Vagina (tissue), 2 donors: ENCODE measurements at regions of chr14 and their contacts with region 1.

Region 1: DNA sequence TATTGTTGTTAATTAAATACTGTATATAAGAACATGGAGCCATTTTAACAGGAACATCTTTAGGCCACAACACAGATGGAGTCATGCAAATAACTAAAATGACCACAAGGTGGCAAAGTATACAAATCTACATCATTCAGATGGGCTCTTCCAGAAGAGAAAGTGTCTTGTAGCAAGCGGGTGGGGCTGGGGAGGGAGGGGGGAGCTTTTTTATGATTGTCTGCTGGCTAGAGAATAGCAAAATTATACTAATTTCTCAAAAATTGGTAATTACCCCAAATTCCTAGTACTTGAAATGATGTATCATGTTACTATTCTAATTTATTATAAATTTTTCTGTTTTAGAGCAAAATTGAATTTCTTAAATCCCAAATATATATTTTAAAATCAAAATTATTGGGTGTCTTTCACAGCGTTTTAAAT is 378.7 kb downstream of the PRKD1 start:
- DNase-seq: no peak
- H3K4me3 ChIP-seq: no peak overlapping the region
- H3K27ac ChIP-seq: no peak overlapping the region
- H3K4me1 ChIP-seq: no peaks in the 10 kb centered on the region
- H3K27me3 ChIP-seq: no peaks in the 10 kb centered on the region
- CTCF ChIP-seq: peak; percentile 16 to 52 (median 22)
- POLR2A ChIP-seq: no peak

Region 2: GRCh38 chr14:29421156-29421728 is 127.7 kb before region 1 on chr14:
- intact Hi-C with region 1: no loop called
- DNase-seq: no peak
- H3K4me3 ChIP-seq: no peak overlapping the region
- H3K27ac ChIP-seq: no peak overlapping the region
- H3K4me1 ChIP-seq: no peaks in the 10 kb centered on the region
- H3K27me3 ChIP-seq: no peaks in the 10 kb centered on the region
- CTCF ChIP-seq: no peak
- POLR2A ChIP-seq: no peak

Region 3: DNA sequence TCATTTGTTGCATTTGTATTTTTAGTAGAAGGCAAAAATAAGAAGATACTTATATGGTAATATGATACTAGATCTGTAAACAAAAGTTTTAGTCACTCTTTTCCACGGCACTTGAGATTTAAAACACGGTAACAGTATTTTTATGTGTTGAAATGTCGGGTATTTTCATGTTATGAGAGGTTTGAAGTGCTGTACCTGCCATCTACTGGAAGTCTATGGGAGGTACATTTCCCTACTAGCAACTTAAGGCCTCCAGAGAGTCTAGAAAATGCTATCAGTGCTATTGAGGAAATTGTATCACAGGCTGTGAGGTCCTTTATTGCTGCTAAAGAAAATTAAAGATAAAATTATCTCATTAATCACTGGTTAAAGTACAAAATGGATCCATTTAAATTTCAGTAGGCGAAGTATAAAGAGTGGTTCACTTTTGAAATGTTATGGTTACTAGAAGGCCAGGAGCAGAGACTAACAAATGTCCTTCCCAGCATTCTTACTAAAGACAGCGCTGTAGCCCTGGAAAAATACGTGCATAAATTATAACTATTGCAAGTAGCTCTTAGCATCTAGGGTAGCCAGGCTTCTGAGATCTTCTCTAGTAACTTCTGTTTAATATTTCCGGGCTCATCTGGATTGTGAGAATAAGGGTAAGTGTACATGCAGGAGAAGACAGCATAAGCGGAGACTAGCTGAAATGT is 456.3 kb after region 1 on chr14:
- intact Hi-C with region 1: loop called (anchors 10 kb)
- DNase-seq: no peak
- H3K4me3 ChIP-seq: no peak overlapping the region
- H3K27ac ChIP-seq: no peak overlapping the region
- H3K4me1 ChIP-seq: no peaks in the 10 kb centered on the region
- H3K27me3 ChIP-seq: no peaks in the 10 kb centered on the region
- CTCF ChIP-seq: peak in 2 of 3 experiments; percentile 49 to 61
- POLR2A ChIP-seq: no peak

Region 4: DNA sequence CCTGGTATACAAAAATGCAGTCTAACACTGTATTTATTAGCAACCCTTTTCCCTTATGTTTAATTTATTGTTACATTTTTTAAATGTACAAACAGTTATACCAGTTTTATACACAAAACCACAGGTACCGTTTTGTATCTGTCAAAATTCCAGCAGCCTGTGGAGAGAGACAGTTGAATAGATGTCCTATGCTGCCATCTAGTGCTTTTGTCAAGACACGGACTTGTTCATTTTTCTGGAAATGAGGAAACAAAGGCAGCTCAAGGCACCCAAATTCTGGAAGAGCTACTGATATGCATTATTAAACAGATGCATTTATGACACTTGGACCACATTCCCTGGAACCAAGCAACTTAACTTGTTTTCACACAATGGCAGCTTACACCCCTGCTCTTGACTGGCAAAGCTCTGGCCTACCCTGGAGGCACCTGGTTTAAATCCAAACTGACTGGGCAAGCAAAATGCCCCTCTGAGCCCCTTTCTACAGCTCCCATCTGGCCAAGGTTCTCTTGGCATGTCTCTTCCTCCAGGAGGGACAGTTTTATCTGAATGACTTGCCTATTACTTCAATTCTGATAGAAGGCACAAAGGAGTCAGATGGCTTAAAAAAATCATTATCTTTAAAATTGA is 665.6 kb after region 1 on chr14:
- intact Hi-C with region 1: loop called (anchors 5 kb)
- DNase-seq: no peak
- H3K4me3 ChIP-seq: no peak overlapping the region
- H3K27ac ChIP-seq: no peak overlapping the region
- H3K4me1 ChIP-seq: no peaks in the 10 kb centered on the region
- H3K27me3 ChIP-seq: no peaks in the 10 kb centered on the region
- CTCF ChIP-seq: peak; percentile 13 to 55 (median 54)
- POLR2A ChIP-seq: no peak